Mammary epithelial cell (primary cell): ENCODE measurements at regions of chr12 and their contacts with region 1.

Region 1: DNA sequence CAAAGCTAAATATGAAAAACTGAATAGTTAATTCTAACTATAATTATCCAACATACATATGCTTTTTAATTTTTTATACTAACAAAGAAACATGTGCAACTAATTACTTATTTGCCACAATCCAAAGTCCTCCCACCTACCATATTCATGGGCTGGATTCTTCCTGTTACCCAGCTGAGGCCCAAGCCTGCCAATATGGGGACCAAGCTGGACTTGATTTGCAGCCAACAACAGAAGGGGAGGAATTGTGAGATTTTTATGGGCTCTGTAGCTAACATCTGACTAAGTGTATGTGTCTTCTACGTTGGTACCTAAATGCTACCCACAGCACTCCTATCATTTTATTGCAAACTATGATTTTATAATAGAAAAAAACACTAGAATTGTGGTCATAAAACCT is 13.1 kb upstream of the ANKS1B start:
- DNase-seq: no peak
- H3K4me3 ChIP-seq: no peak overlapping the region
- H3K27ac ChIP-seq: no peak overlapping the region
- H3K4me1 ChIP-seq: no peaks in the 10 kb centered on the region
- H3K27me3 ChIP-seq: no peaks in the 10 kb centered on the region
- CTCF ChIP-seq: no peak

Region 2: GRCh38 chr12:99959547-99960180 is 38.1 kb before region 1 on chr12:
- CTCF ChIA-PET with region 1: no interaction called
- dilution Hi-C with region 1: loop called (anchors 5 kb)
- in situ Hi-C with region 1: no loop called
- intact Hi-C with region 1: no loop called
- DNase-seq: peak; percentile 10
- H3K4me3 ChIP-seq: no peak overlapping the region
- H3K27ac ChIP-seq: no peak overlapping the region
- H3K4me1 ChIP-seq: no peaks in the 10 kb centered on the region
- H3K27me3 ChIP-seq: peaks cover 2% of the 10 kb centered on the region
- CTCF ChIP-seq: no peak

Region 3: DNA sequence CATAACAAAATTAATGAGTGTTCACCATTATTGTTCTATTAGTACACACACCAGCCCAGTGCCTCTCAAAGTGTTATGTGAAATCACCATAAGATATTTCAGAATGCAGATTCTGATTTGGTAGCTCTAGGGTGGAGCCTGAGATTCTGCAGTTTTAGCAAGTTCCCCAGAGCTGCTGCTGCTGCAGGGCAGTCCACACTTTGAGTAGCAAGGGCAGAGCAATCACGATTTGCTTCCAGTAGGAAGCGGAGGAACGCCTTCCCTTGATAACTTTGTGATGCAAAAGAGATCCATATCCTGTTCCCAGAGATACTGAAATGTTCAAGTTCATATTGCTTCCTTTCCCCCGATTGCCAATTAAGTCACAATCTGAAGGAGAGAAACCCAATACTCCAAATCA is 416.9 kb after region 1 on chr12:
- CTCF ChIA-PET with region 1: no interaction called
- dilution Hi-C with region 1: no loop called
- in situ Hi-C with region 1: no loop called
- intact Hi-C with region 1: no loop called
- DNase-seq: no peak
- H3K4me3 ChIP-seq: no peak overlapping the region
- H3K27ac ChIP-seq: no peak overlapping the region
- H3K4me1 ChIP-seq: no peaks in the 10 kb centered on the region
- H3K27me3 ChIP-seq: no peaks in the 10 kb centered on the region
- CTCF ChIP-seq: no peak